ENCODE measurements at regions of chr14 and their contacts with region 1.

Region 1: GRCh38 chr14:71021347-71022014 is 114.2 kb downstream of the PCNX1 start:
- DNase-seq: peak; percentile 34
- H3K4me3 ChIP-seq: no peak overlapping the region
- H3K27ac ChIP-seq: no peak overlapping the region
- H3K27me3 ChIP-seq: no peaks in the 10 kb centered on the region
- CTCF ChIP-seq: no peak

Region 2: GRCh38 chr14:70239802-70240201 is 781.7 kb before region 1 on chr14:
- CTCF ChIA-PET with region 1: no interaction called
- POLR2A ChIA-PET with region 1: no interaction called
- DNase-seq: no peak
- H3K4me3 ChIP-seq: no peak overlapping the region
- H3K27ac ChIP-seq: no peak overlapping the region
- H3K27me3 ChIP-seq: no peaks in the 10 kb centered on the region
- CTCF ChIP-seq: no peak

Region 3: DNA sequence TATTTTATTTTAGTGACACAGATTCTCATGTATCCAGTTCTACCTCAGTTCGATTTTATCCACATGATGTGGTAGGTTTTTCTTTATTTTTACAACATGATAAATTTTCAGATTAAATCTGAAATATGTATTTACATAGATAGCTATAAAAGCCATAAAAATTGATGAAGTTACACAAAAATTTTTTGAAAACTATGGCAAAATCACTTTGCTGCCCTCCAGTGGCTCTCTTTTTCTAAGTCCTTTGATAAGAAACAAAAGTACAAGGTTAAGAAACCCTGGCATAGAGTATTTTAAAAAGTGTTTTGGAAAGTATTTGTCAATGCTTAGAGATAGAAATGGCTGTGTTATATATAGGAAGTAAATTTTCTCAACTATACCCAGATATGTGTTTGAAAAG is 10.0 kb before region 1 on chr14:
- CTCF ChIA-PET with region 1: interaction called, 10 read pairs
- POLR2A ChIA-PET with region 1: no interaction called
- DNase-seq: no peak
- H3K4me3 ChIP-seq: no peak overlapping the region
- H3K27ac ChIP-seq: no peak overlapping the region
- H3K27me3 ChIP-seq: no peaks in the 10 kb centered on the region
- CTCF ChIP-seq: peak; percentile 42; the same call in 1 of the 2 replicates

Region 4: DNA sequence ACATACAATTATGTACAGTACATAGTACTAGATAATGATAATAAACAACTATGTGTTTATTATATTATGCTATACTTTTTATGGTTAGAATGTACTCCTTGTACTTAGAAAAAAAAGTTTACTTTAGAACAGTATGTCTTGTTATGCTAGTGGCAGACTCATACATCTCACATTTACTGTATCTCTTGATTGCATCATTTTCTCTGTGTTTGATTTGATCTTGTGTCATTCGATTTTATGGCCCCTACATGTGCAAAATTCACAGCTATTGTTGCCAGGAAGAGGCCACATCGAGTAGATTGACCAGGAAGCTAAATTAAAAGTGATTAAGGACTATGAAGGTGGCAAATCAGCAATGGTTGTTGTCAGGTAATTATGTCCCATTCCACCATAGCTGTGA is 38.8 kb after region 1 on chr14:
- CTCF ChIA-PET with region 1: no interaction called
- POLR2A ChIA-PET with region 1: no interaction called
- DNase-seq: no peak
- H3K4me3 ChIP-seq: no peak overlapping the region
- H3K27ac ChIP-seq: no peak overlapping the region
- H3K27me3 ChIP-seq: no peaks in the 10 kb centered on the region
- CTCF ChIP-seq: no peak

Region 5: GRCh38 chr14:71261206-71261605 is 239.7 kb after region 1 on chr14:
- CTCF ChIA-PET with region 1: no interaction called
- POLR2A ChIA-PET with region 1: no interaction called
- DNase-seq: no peak
- H3K4me3 ChIP-seq: no peak overlapping the region
- H3K27ac ChIP-seq: no peak overlapping the region
- H3K27me3 ChIP-seq: no peaks in the 10 kb centered on the region
- CTCF ChIP-seq: no peak